Activated T-helper 1 cell treated with anti-CD3 and anti-CD28 coated beads, Interleukin-12 subunit alpha, Interleukin-12 subunit beta, Interleukin-2, Interleukin-4 antibody, amounts not matched to agents 30 ng/mL and 10 ng/mL and 1 ng/mL, durations not matched to agents 14 hours and 24 hours and 36 hours (primary cell): ENCODE measurements at regions of chr5 and their contacts with region 1.

Region 1: DNA sequence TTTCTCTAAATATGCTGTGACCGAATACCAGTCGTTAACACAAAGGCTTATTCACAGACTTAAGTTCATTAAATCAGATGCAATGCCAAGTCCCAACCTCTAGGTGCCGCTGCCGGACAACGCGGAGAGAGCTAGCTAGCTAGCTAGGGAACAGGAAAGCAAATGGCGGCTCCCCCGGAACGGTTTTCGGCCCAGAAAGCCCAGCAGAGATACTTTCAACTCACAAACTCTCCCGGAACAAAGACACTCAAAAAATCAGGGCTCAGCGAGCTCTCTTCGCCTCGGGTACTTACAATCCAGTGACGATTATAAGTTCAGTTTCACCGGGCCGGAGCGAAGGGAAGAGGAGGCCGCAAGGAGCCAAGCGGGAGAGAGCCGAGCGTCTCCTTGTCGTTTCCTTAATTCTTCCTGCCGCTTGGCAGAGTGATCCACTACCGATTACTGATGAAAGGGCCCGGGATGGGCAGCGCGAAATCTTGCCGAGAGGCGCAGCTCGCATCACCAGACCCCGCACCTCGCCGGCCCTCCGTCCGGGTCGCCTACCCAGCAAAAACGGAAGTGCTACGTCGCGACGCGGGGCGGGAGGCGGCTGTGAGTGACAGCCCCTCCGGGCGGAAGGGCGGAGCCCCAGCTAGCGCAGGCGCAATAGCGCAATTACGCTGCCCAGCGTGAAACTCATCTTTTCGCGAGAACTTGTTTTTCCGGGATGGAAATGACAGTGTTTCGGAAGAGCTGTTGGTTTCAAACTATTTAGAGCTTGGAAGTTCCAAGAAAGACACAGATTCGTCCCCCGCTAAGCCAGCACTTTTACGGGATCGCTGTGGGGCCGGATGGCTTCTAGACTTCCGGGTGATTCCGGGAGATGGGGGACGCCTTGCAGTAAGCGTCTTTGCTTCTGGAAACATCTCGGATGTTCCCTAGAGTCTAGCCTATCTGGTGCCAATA is at the start of gene TAF7:
- DNase-seq: peak; percentile 91
- H3K4me3 Mint-ChIP-seq: peak within 1 kb of the TSS; percentile 94
- H3K27ac Mint-ChIP-seq: peak within 1 kb of the TSS; percentile 98
- H3K4me1 Mint-ChIP-seq: peaks cover 31% of the 10 kb centered on the region
- H3K27me3 Mint-ChIP-seq: no peaks in the 10 kb centered on the region
- total RNA-seq, gene TAF7: 71.6 and 73.7 TPM in 2 replicates

Region 2: GRCh38 chr5:141258948-141259347 is 61.5 kb before region 1 on chr5:
- intact Hi-C with region 1: loop called (anchors 2 kb)
- DNase-seq: no peak
- H3K4me3 Mint-ChIP-seq: no peak overlapping the region
- H3K27ac Mint-ChIP-seq: no peak overlapping the region
- H3K4me1 Mint-ChIP-seq: no peaks in the 10 kb centered on the region
- H3K27me3 Mint-ChIP-seq: no peaks in the 10 kb centered on the region